ENCODE measurements at regions of chr1 and their contacts with region 1.

Region 1: GRCh38 chr1:46247436-46248121 is at the start of gene RAD54L:
- DNase-seq: peak; percentile 97
- H3K4me3 Mint-ChIP-seq: peak within 1 kb of the TSS; percentile 98
- H3K27ac Mint-ChIP-seq: peak within 1 kb of the TSS; percentile 97
- H3K4me1 Mint-ChIP-seq: peaks cover 32% of the 10 kb centered on the region
- H3K27me3 Mint-ChIP-seq: no peaks in the 10 kb centered on the region
- total RNA-seq, gene RAD54L: 48.0 and 49.0 TPM in 2 replicates

Region 2: GRCh38 chr1:44799770-44800584 is 1447.6 kb before region 1 on chr1 and contains the start of gene PLK3:
- intact Hi-C with region 1: loop called (anchors 2 kb)
- DNase-seq: peak; percentile 97
- H3K4me3 Mint-ChIP-seq: peak within 1 kb of the TSS; percentile 97
- H3K27ac Mint-ChIP-seq: peak within 1 kb of the TSS; percentile 99
- H3K4me1 Mint-ChIP-seq: peaks cover 23% of the 10 kb centered on the region
- H3K27me3 Mint-ChIP-seq: no peaks in the 10 kb centered on the region
- total RNA-seq, gene PLK3: 128 and 135 TPM in 2 replicates

Region 3: GRCh38 chr1:46303038-46303871 is 55.7 kb after region 1 on chr1 and contains the starts of genes LRRC41 and UQCRH:
- intact Hi-C with region 1: loop called (anchors 1 kb)
- DNase-seq: peak; percentile 92
- H3K4me3 Mint-ChIP-seq: peak within 1 kb of the TSS; percentile 99
- H3K27ac Mint-ChIP-seq: peak within 1 kb of the TSS; percentile 97
- H3K4me1 Mint-ChIP-seq: peaks cover 38% of the 10 kb centered on the region
- H3K27me3 Mint-ChIP-seq: no peaks in the 10 kb centered on the region
- total RNA-seq, gene LRRC41: 70.1 and 70.6 TPM in 2 replicates
- total RNA-seq, gene UQCRH: 262 and 275 TPM in 2 replicates

Region 4: DNA sequence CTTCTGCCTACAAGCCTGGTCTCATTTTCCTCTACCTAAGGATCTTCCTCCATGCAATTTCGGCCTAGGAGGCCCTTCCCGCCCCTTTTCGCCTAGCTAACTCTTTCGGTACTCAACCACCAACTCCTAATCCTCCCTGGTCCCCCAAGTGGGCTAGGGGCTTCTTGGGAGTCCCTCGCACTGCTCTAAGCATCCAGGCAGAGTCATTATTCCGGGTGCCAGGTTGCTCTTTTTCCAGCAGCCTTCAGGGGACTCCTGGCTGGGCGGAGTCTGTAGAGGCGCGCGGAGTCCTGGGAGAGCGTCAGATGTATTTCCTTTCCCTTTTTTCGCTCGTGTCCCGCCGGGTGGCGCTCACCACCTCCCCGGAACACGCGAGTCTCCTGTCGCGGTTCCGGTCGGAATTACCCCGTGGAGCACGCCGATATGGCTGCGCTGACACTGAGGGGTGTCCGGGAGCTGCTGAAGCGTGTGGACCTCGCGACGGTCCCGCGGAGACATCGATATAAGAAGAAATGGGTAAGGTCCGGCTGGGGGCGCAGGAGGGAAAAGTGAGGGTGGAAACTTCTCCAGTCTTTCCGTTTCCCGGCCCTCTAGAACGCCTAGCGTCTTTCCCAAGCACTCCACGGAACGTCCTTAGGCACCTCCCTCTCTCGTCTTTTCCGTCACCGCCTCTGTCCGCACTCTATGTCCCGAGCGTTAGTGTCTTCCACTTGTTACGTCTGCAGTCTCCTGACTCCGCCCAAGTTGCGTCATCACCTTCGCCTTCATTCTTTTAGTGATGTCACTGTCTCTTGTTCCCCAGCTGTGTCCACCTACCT is 93.0 kb after region 1 on chr1 and contains the start of gene NSUN4:
- intact Hi-C with region 1: loop called (anchors 2 kb)
- DNase-seq: peak; percentile 81
- H3K4me3 Mint-ChIP-seq: peak within 1 kb of the TSS; percentile 100
- H3K27ac Mint-ChIP-seq: peak within 1 kb of the TSS; percentile 99
- H3K4me1 Mint-ChIP-seq: peaks cover 32% of the 10 kb centered on the region
- H3K27me3 Mint-ChIP-seq: no peaks in the 10 kb centered on the region
- total RNA-seq, gene NSUN4: 37.2 and 37.6 TPM in 2 replicates

Measured in activated T-helper 2 cell treated with anti-CD3 and anti-CD28 coated beads, Interferon-gamma antibody, Interleukin-2, Interleukin-4, amounts not matched to agents 10 μg/mL and 5 μg/mL and 100 μg/mL, durations not matched to agents 14 hours and 24 hours and 36 hours (primary cell).